Right ventricle myocardium inferior (tissue), 1 donor: ENCODE measurements at regions of chr15 and their contacts with region 1.

Region 1: GRCh38 chr15:43285609-43286037 is 18.9 kb upstream of the TGM5 start:
- DNase-seq: no peak
- ATAC-seq: peak; percentile 63

Region 2: DNA sequence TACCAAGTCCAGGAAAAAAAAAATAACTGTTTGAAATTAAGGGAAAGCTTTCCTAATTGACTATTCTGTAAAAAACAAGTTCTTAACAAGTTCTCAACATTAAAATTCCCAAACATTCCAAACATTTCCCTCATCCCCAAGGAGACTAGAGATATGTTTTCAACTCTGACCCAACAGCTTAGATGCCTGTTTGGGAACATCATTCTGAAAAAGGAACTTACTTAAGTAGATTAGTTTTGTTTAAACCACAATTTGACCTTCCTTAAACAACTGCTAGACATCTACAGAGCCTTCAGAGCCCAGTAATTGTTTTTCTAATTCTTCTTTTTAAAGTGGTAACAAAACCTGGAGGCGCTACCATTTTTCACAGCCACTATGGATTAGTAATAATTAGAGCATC is 192.6 kb before region 1 on chr15:
- intact Hi-C with region 1: no loop called
- DNase-seq: no peak
- ATAC-seq: no peak

Region 3: GRCh38 chr15:43225201-43225949 is 60.2 kb before region 1 on chr15:
- intact Hi-C with region 1: loop called (anchors 1 kb)
- DNase-seq: no peak
- ATAC-seq: peak; percentile 82

Region 4: GRCh38 chr15:43505738-43506137 is 220.1 kb after region 1 on chr15:
- intact Hi-C with region 1: no loop called
- DNase-seq: no peak
- ATAC-seq: no peak